Activated CD4-positive, alpha-beta memory T cell treated with anti-CD3 and anti-CD28 coated beads for 36 hours (primary cell): ENCODE measurements at regions of chrX and their contacts with region 1.

Region 1: GRCh38 chrX:78517124-78517523 is 142.0 kb downstream of the RTL3 start:
- DNase-seq: peak; percentile 77
- H3K4me3 Mint-ChIP-seq: no peak overlapping the region
- H3K27ac Mint-ChIP-seq: peak overlapping the region; percentile 84
- H3K4me1 Mint-ChIP-seq: peaks cover 45% of the 10 kb centered on the region
- H3K27me3 Mint-ChIP-seq: no peaks in the 10 kb centered on the region

Region 2: GRCh38 chrX:78139160-78140123 is 377.7 kb before region 1 on chrX and contains the start of gene TAF9B:
- CTCF ChIA-PET with region 1: no interaction called
- POLR2A ChIA-PET with region 1: no interaction called
- intact Hi-C with region 1: loop called (anchors 10 kb)
- DNase-seq: peak; percentile 90
- H3K4me3 Mint-ChIP-seq: peak within 1 kb of the TSS; percentile 88
- H3K27ac Mint-ChIP-seq: peak within 1 kb of the TSS; percentile 87
- H3K4me1 Mint-ChIP-seq: peaks cover 16% of the 10 kb centered on the region
- H3K27me3 Mint-ChIP-seq: no peaks in the 10 kb centered on the region
- total RNA-seq, gene TAF9B: 23.0 TPM

Region 3: DNA sequence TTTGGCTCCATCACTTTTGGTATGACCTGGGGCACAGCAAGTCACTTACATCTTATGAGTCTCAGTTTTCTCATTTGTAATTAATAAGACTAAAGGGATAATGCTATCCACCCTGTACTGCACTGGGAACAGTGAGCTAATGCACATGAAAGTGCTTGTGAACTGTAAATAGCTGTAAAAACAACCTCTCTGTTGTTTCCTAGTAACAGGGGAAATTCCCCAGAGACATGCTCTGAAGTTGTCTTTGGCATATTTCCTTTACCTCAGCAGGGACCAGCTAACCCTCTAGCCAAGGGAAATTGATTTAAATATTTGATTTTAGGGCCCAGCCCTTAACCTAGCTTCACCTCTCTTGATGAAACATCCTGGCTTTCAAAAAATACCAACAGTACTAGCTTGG is 183.6 kb before region 1 on chrX:
- CTCF ChIA-PET with region 1: no interaction called
- POLR2A ChIA-PET with region 1: no interaction called
- intact Hi-C with region 1: loop called (anchors 1 kb)
- DNase-seq: no peak
- H3K4me3 Mint-ChIP-seq: no peak overlapping the region
- H3K27ac Mint-ChIP-seq: peak overlapping the region; percentile 16
- H3K4me1 Mint-ChIP-seq: peaks cover 62% of the 10 kb centered on the region
- H3K27me3 Mint-ChIP-seq: no peaks in the 10 kb centered on the region

Region 4: GRCh38 chrX:78653118-78653822 is 136.1 kb after region 1 on chrX:
- CTCF ChIA-PET with region 1: no interaction called
- POLR2A ChIA-PET with region 1: no interaction called
- intact Hi-C with region 1: loop called (anchors 5 kb)
- DNase-seq: no peak
- H3K4me3 Mint-ChIP-seq: no peak overlapping the region
- H3K27ac Mint-ChIP-seq: no peak overlapping the region
- H3K4me1 Mint-ChIP-seq: peaks cover 17% of the 10 kb centered on the region
- H3K27me3 Mint-ChIP-seq: no peaks in the 10 kb centered on the region

Region 5: GRCh38 chrX:79153348-79153747 is 636.2 kb after region 1 on chrX:
- CTCF ChIA-PET with region 1: no interaction called
- POLR2A ChIA-PET with region 1: no interaction called
- intact Hi-C with region 1: loop called (anchors 10 kb)
- DNase-seq: no peak
- H3K4me3 Mint-ChIP-seq: peak overlapping the region; percentile 75
- H3K27ac Mint-ChIP-seq: peak overlapping the region; percentile 94
- H3K4me1 Mint-ChIP-seq: peaks cover 62% of the 10 kb centered on the region
- H3K27me3 Mint-ChIP-seq: no peaks in the 10 kb centered on the region